HepG2 (cell line): ENCODE measurements at regions of chr20 and their contacts with region 1.

Region 1: DNA sequence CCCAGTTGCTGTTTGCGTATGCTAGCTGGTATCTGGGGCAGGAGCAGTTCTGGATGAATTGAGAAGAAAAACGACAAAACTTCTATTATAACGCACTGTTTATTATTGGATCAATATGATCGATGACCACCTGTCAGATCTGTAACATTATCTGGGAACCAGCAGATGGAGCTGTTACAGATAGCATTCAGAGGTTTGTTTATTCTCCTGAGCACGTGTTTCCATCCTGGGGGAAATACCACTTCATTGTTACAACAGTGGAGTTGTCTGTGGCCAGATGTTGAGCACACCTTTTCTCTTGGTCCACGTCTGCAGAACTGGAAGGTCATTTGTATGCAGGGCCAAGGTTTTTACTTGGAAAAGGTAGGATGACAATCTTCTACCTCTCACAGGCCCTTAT is 16.0 kb upstream of the NKX2-2 start:
- DNase-seq: peak; percentile 66
- ATAC-seq: peak; percentile 88
- H3K4me3 ChIP-seq: no peak overlapping the region
- H3K27ac ChIP-seq: no peak overlapping the region
- H3K4me1 ChIP-seq: peaks cover 16% of the 10 kb centered on the region; the same call in 1 of the 2 replicates
- H3K27me3 ChIP-seq: peaks cover 3 to 10% of the 10 kb centered on the region in 2 experiments; a peak in 4 of 5 replicates
- CTCF ChIP-seq: peak; percentile 76
- EP300 ChIP-seq: no peak
- POLR2A ChIP-seq: no peak
- RAD21 ChIP-seq: 0 out of 2 replicates have a peak, but pooled peaks have one; percentile 24

Region 2: GRCh38 chr20:21564127-21564773 is 34.4 kb after region 1 on chr20:
- CTCF ChIA-PET with region 1: no interaction called
- POLR2A ChIA-PET with region 1: no interaction called
- in situ Hi-C with region 1: no loop called
- intact Hi-C with region 1: loop called (anchors 2 kb)
- DNase-seq: peak; percentile 84
- ATAC-seq: peak; percentile 96
- H3K4me3 ChIP-seq: peak overlapping the region in 2 of 3 experiments; percentile 14 to 23; a peak in 2 of 6 replicates
- H3K27ac ChIP-seq: no peak overlapping the region
- H3K4me1 ChIP-seq: peaks cover 14% of the 10 kb centered on the region
- H3K27me3 ChIP-seq: peaks cover 2 to 25% of the 10 kb centered on the region in 2 experiments; a peak in 2 of 5 replicates
- CTCF ChIP-seq: no peak
- EP300 ChIP-seq: peak in 1 of 2 experiments; percentile 40; a peak in 1 of 4 replicates
- POLR2A ChIP-seq: no peak
- RAD21 ChIP-seq: no peak

Region 3: GRCh38 chr20:21571841-21572690 is 42.2 kb after region 1 on chr20:
- CTCF ChIA-PET with region 1: interaction called, 28 read pairs
- POLR2A ChIA-PET with region 1: no interaction called
- in situ Hi-C with region 1: loop called (anchors 5 kb)
- intact Hi-C with region 1: loop called (anchors 1 kb)
- DNase-seq: peak; percentile 23
- ATAC-seq: peak; percentile 48
- H3K4me3 ChIP-seq: no peak overlapping the region
- H3K27ac ChIP-seq: no peak overlapping the region
- H3K4me1 ChIP-seq: no peaks in the 10 kb centered on the region
- H3K27me3 ChIP-seq: peaks cover 4 to 37% of the 10 kb centered on the region in 2 experiments; a peak in 3 of 5 replicates
- CTCF ChIP-seq: peak; percentile 86
- EP300 ChIP-seq: no peak
- POLR2A ChIP-seq: no peak
- RAD21 ChIP-seq: peak; percentile 79

Region 4: GRCh38 chr20:21583486-21584168 is 53.8 kb after region 1 on chr20:
- CTCF ChIA-PET with region 1: no interaction called
- POLR2A ChIA-PET with region 1: no interaction called
- in situ Hi-C with region 1: no loop called
- intact Hi-C with region 1: no loop called
- DNase-seq: no peak
- ATAC-seq: no peak
- H3K4me3 ChIP-seq: no peak overlapping the region
- H3K27ac ChIP-seq: no peak overlapping the region
- H3K4me1 ChIP-seq: peaks cover 5% of the 10 kb centered on the region; the same call in 1 of the 2 replicates
- H3K27me3 ChIP-seq: peaks cover 15 to 54% of the 10 kb centered on the region in 2 experiments; a peak in 4 of 5 replicates
- CTCF ChIP-seq: no peak
- EP300 ChIP-seq: no peak
- POLR2A ChIP-seq: no peak
- RAD21 ChIP-seq: no peak

Region 5: DNA sequence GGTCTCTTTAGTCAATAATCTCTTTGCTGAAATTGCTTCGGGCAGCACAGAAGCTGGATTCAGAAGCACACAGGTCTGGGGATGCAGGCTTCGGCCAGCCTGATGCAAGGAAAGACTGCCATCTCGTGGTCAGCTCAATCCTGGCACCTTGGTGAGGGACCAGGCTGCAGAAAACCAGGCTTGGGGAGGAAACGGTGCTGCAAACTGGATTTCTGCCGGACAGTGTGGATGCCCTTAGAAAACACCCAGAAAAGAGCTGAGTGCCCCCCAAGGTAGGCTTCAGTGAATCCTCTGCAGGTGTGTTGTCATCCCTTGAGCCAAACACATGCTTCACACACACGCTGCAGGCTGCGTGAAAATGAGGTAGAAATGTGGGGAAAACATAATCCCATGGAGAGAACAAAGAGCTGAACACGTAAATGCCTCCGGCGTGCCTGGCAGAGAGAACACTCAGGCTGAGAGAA is 85.8 kb after region 1 on chr20:
- CTCF ChIA-PET with region 1: interaction called, 8 read pairs
- POLR2A ChIA-PET with region 1: no interaction called
- in situ Hi-C with region 1: no loop called
- intact Hi-C with region 1: loop called (anchors 1 kb)
- DNase-seq: peak; percentile 66
- ATAC-seq: peak; percentile 98
- H3K4me3 ChIP-seq: no peak overlapping the region
- H3K27ac ChIP-seq: no peak overlapping the region
- H3K4me1 ChIP-seq: no peaks in the 10 kb centered on the region
- H3K27me3 ChIP-seq: peaks cover 2 to 5% of the 10 kb centered on the region in 2 experiments; a peak in 3 of 5 replicates
- CTCF ChIP-seq: peak; percentile 95
- EP300 ChIP-seq: no peak
- POLR2A ChIP-seq: no peak
- RAD21 ChIP-seq: peak; percentile 79

Region 6: GRCh38 chr20:21936720-21937380 is 407.0 kb after region 1 on chr20:
- CTCF ChIA-PET with region 1: no interaction called
- POLR2A ChIA-PET with region 1: no interaction called
- in situ Hi-C with region 1: no loop called
- intact Hi-C with region 1: no loop called
- DNase-seq: no peak
- ATAC-seq: no peak
- H3K4me3 ChIP-seq: no peak overlapping the region
- H3K27ac ChIP-seq: no peak overlapping the region
- H3K4me1 ChIP-seq: no peaks in the 10 kb centered on the region
- H3K27me3 ChIP-seq: no peaks in the 10 kb centered on the region
- CTCF ChIP-seq: no peak
- EP300 ChIP-seq: no peak
- POLR2A ChIP-seq: no peak
- RAD21 ChIP-seq: no peak